Activated CD4-positive, alpha-beta memory T cell treated with anti-CD3 and anti-CD28 coated beads, Interleukin-2, amount 10 ng/mL, durations not matched to agents 7 days and 5 days (primary cell): ENCODE measurements at regions of chr6 and their contacts with region 1.

Region 1: DNA sequence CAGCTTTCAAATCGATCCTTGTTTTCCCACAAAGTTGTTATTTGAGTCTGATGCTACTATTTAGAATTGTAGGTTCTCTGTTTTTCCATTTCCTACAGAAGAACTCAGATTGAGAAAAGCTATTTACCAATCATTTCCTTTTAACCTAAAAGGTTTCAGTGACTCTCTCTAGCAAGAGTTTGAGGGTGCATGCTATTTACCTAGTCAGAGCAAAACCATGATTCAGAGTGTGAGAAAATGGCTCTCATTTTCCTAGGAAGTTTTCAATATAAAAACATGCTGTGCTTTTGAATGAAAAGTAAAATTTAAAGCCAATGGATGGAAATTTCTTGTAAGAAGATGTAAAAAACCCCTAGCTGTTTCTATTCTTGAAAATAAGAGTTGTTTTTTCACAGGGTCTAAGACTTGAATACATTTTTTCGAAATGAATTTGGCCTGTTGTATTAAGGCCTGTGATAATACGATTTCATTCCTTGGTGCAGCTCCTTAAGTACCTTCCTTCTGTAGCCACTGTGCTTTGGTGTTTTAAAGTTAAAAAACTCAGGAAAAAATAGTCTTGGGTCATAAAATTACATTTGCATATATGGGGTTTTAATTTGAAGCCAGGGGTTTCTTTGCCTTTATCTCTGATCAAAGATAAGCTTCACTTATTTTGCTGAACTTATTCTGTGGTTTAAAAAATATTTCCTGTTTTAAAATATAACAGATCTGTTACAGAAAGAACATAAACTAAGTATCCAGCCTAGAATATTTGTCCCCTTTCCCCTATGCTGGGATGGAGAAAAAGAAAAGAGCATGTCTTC is 18.0 kb upstream of the RSPH3 start:
- DNase-seq: no peak
- H3K4me3 Mint-ChIP-seq: no peak overlapping the region
- H3K27ac Mint-ChIP-seq: peak overlapping the region; percentile 4
- H3K4me1 Mint-ChIP-seq: peaks cover 39% of the 10 kb centered on the region
- H3K27me3 Mint-ChIP-seq: no peaks in the 10 kb centered on the region

Region 2: GRCh38 chr6:159110013-159110412 is 92.1 kb after region 1 on chr6:
- CTCF ChIA-PET with region 1: interaction called, 410 read pairs
- POLR2A ChIA-PET with region 1: interaction called, 6 read pairs
- DNase-seq: peak; percentile 41
- H3K4me3 Mint-ChIP-seq: no peak overlapping the region
- H3K27ac Mint-ChIP-seq: no peak overlapping the region
- H3K4me1 Mint-ChIP-seq: peaks cover 57% of the 10 kb centered on the region
- H3K27me3 Mint-ChIP-seq: no peaks in the 10 kb centered on the region